WTC11 (cell line): ENCODE measurements at regions of chr20 and their contacts with region 1.

Region 1: DNA sequence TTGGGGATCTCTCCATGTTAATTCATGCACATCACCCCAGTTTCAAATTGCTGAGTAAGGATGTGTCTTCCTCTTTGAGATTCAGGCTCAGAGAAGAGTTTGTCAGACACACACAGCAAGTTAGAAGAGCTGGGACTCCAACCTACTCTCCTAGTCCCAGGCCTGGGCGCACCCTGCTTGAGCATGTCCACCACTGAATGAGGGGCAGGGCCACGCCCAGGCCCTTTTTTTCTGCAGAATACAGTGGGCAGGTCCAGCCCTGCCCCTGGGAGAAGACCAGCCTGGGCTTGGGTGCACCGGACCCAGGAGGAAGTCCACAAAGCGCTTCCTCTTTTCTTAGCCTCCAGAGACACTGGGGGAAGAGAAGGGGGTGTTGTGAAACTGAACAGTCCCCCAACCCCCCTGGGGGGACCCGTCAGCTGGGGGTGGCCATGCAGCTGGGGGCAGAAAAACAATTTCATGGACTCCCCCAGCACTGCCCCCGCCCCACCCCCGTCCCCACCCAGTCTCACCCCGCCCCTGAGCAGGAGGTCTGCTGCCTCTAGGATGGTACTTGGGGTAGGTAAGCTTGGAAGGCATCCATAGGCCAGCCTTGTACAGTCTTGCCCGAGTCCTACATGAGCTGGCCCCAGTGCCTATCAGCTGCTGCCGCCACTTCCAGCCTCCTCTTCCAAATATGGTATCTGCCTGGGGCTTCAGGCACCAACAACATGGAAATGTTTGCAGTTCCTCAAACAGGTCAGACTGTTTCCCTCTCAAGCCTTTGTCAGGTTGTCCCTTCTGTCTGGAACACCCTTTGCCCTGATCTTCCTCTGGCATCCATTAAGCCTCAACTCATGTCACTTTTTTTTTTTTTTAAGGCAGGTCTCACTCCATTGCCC is 11.7 kb upstream of the HCK start:
- DNase-seq: no peak
- ATAC-seq: peak; percentile 52
- H3K4me3 Mint-ChIP-seq: no peak overlapping the region
- H3K27ac Mint-ChIP-seq: 0 out of 2 replicates have a peak overlapping the region, but pooled peaks have one; percentile 6
- H3K4me1 Mint-ChIP-seq: peaks cover 25% of the 10 kb centered on the region
- H3K27me3 Mint-ChIP-seq: 0 out of 2 replicates have a peak, but pooled peaks cover 1% of the 10 kb centered on the region
- CTCF ChIP-seq: no peak

Region 2: GRCh38 chr20:32091888-32092346 is 51.5 kb after region 1 on chr20:
- CTCF ChIA-PET with region 1: interaction called, 17 read pairs
- POLR2A ChIA-PET with region 1: interaction called, 5 read pairs
- DNase-seq: peak; percentile 91
- ATAC-seq: peak; percentile 62
- H3K4me3 Mint-ChIP-seq: no peak overlapping the region
- H3K27ac Mint-ChIP-seq: no peak overlapping the region
- H3K4me1 Mint-ChIP-seq: peaks cover 33% of the 10 kb centered on the region
- H3K27me3 Mint-ChIP-seq: peaks cover 6% of the 10 kb centered on the region; the same call in 1 of the 2 replicates
- CTCF ChIP-seq: peak; percentile 82